Caco-2 (cell line): ENCODE measurements at regions of chr7 and their contacts with region 1.

Region 1: GRCh38 chr7:116809636-116810266 is 52.6 kb upstream of the CAPZA2 start:
- DNase-seq: peak; percentile 62 to 83
- H3K4me3 ChIP-seq: peak overlapping the region; percentile 13
- H3K4me3 Mint-ChIP-seq: peak overlapping the region; percentile 75
- H3K27ac Mint-ChIP-seq: peak overlapping the region; percentile 89
- H3K4me1 ChIP-seq: peaks cover 66% of the 10 kb centered on the region
- H3K4me1 Mint-ChIP-seq: peaks cover 45% of the 10 kb centered on the region
- H3K27me3 ChIP-seq: no peaks in the 10 kb centered on the region
- H3K27me3 Mint-ChIP-seq: no peaks in the 10 kb centered on the region
- CTCF ChIP-seq: peak; percentile 42 to 66

Region 2: DNA sequence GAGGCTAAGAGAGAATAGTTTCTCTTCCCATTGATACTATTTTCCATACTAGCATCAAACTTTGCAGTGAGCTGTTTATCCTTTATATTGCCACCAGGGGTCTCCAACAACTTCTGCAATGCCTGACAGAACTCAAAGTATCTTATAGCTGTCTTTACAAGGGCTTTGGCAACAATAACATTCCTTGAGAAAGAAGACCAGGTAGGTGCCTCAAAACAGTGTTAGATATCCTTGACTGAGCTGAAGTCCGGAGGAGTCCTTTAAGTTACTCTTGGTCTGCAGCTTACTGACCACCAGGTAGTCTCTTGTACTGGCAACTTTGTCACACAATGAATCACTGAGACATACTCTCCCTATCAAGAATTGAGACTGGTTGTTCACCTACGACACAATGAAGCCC is 629.4 kb before region 1 on chr7:
- CTCF ChIA-PET with region 1: interaction called, 3 read pairs
- POLR2A ChIA-PET with region 1: no interaction called
- intact Hi-C with region 1: loop called (anchors 1 kb)
- DNase-seq: peak; percentile 47 to 58
- H3K4me3 ChIP-seq: no peak overlapping the region
- H3K4me3 Mint-ChIP-seq: no peak overlapping the region
- H3K27ac Mint-ChIP-seq: no peak overlapping the region
- H3K4me1 ChIP-seq: no peaks in the 10 kb centered on the region
- H3K4me1 Mint-ChIP-seq: no peaks in the 10 kb centered on the region
- H3K27me3 ChIP-seq: no peaks in the 10 kb centered on the region
- H3K27me3 Mint-ChIP-seq: no peaks in the 10 kb centered on the region
- CTCF ChIP-seq: peak; percentile 73 to 80

Region 3: DNA sequence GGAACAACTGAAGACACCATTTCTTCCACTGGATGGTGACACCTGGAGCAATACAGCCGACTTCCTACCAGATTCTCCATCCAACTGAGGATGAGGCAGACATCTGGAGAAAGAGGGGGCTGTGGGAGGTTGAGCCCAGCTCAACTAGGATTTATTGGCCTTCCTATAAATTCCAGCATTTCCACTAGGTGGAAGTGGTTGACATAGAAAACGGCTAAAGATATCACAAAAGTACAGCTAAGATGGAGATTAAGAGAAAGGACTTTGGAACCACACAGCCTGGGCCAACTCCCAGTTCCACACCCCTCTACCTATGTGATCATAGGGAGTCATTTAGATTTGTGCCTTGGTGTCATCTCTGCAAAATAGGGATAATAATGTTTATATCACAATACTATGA is 371.5 kb before region 1 on chr7:
- CTCF ChIA-PET with region 1: no interaction called
- POLR2A ChIA-PET with region 1: no interaction called
- intact Hi-C with region 1: loop called (anchors 5 kb)
- DNase-seq: peak; percentile 42 to 47
- H3K4me3 ChIP-seq: no peak overlapping the region
- H3K4me3 Mint-ChIP-seq: no peak overlapping the region
- H3K27ac Mint-ChIP-seq: no peak overlapping the region
- H3K4me1 ChIP-seq: peaks cover 24% of the 10 kb centered on the region
- H3K4me1 Mint-ChIP-seq: peaks cover 4% of the 10 kb centered on the region
- H3K27me3 ChIP-seq: no peaks in the 10 kb centered on the region
- H3K27me3 Mint-ChIP-seq: no peaks in the 10 kb centered on the region
- CTCF ChIP-seq: peak; percentile 19 to 41

Region 4: DNA sequence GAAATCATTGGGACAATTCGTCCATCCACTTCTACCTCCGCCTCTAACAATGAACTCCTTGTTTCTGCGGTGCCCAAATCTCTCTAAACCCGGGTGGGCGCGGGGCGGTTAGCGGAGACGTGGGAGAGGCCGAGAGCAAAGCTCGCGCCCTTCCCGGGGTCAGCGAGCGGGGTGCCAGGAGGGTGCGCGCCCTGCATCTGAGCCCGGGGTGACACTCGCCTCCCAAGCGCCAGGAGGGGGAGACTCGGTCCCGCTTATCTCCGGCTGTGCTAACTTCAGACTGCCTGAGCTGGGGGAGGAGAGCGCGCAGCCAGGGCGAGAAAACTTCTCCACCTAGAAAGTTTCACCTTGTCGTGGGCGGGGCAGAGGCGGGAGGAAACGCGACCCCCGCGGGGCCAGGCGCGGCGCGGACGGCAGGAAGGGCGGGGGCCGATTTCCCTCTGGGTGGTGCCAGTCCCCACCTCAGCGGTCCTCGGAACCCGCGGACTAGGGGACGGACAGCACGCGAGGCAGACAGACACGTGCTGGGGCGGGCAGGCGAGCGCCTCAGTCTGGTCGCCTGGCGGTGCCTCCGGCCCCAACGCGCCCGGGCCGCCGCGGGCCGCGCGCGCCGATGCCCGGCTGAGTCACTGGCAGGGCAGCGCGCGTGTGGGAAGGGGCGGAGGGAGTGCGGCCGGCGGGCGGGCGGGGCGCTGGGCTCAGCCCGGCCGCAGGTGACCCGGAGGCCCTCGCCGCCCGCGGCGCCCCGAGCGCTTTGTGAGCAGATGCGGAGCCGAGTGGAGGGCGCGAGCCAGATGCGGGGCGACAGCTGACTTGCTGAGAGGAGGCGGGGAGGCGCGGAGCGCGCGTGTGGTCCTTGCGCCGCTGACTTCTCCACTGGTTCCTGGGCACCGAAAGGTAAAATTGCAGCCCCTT is 137.8 kb before region 1 on chr7 and contains the start of gene MET:
- CTCF ChIA-PET with region 1: interaction called, 7 read pairs
- POLR2A ChIA-PET with region 1: no interaction called
- intact Hi-C with region 1: loop called (anchors 1 kb)
- DNase-seq: peak; percentile 91 to 92
- H3K4me3 ChIP-seq: peak within 1 kb of the TSS; percentile 84
- H3K4me3 Mint-ChIP-seq: peak within 1 kb of the TSS; percentile 94
- H3K27ac Mint-ChIP-seq: peak within 1 kb of the TSS; percentile 47
- H3K4me1 ChIP-seq: peaks cover 5% of the 10 kb centered on the region
- H3K4me1 Mint-ChIP-seq: peaks cover 13% of the 10 kb centered on the region
- H3K27me3 ChIP-seq: no peaks in the 10 kb centered on the region
- H3K27me3 Mint-ChIP-seq: no peaks in the 10 kb centered on the region
- CTCF ChIP-seq: peak; percentile 70 to 87
- total RNA-seq, gene MET: 72.6 and 82.9 TPM in 2 replicates

Region 5: GRCh38 chr7:116762971-116763370 is 46.8 kb before region 1 on chr7:
- CTCF ChIA-PET with region 1: no interaction called
- POLR2A ChIA-PET with region 1: no interaction called
- intact Hi-C with region 1: no loop called
- DNase-seq: no peak
- H3K4me3 ChIP-seq: no peak overlapping the region
- H3K4me3 Mint-ChIP-seq: no peak overlapping the region
- H3K27ac Mint-ChIP-seq: no peak overlapping the region
- H3K4me1 ChIP-seq: no peaks in the 10 kb centered on the region
- H3K4me1 Mint-ChIP-seq: no peaks in the 10 kb centered on the region
- H3K27me3 ChIP-seq: no peaks in the 10 kb centered on the region
- H3K27me3 Mint-ChIP-seq: no peaks in the 10 kb centered on the region
- CTCF ChIP-seq: no peak

Region 6: DNA sequence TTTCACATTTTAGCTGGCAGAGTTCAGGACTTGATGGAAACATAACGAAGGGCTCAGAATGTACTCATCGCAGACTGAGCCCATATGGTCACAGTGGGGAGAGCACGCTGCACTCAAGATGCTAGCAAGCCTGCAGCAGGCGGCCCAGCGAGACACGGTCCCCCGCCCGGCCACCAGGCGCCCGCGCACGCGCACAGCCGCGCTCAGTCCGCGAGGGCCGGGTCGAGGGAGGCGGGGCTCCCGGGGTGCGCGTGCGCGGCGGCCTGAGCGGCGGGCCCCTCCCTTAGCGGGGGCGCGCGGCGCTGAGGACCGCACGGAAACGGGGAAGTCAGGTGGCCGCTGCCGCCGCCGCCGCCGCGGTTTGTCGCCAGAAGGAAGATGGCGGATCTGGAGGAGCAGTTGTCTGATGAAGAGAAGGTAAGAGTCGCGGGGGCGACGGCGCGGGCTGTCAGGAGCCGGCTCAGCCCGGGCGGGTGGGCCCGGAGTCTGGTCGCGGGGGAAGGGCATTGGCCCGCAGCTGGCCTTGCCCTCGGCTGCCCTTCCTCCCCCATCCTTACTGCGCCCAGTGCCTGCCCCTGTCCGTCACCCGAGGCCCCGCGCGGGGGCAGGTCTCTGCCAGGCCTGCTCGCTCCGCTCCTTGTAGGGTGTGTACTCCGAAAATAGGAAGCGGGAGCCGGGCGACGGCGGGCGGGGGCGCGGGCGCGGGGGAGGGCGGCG is 52.6 kb after region 1 on chr7 and contains the start of gene CAPZA2:
- CTCF ChIA-PET with region 1: no interaction called
- POLR2A ChIA-PET with region 1: no interaction called
- intact Hi-C with region 1: loop called (anchors 1 kb)
- DNase-seq: peak; percentile 91 to 97
- H3K4me3 ChIP-seq: peak within 1 kb of the TSS; percentile 99
- H3K4me3 Mint-ChIP-seq: peak within 1 kb of the TSS; percentile 95
- H3K27ac Mint-ChIP-seq: peak within 1 kb of the TSS; percentile 93
- H3K4me1 ChIP-seq: peaks cover 16% of the 10 kb centered on the region
- H3K4me1 Mint-ChIP-seq: peaks cover 12% of the 10 kb centered on the region
- H3K27me3 ChIP-seq: no peaks in the 10 kb centered on the region
- H3K27me3 Mint-ChIP-seq: no peaks in the 10 kb centered on the region
- CTCF ChIP-seq: peak; percentile 8 to 29
- total RNA-seq, gene CAPZA2: 271 and 281 TPM in 2 replicates

Region 7: DNA sequence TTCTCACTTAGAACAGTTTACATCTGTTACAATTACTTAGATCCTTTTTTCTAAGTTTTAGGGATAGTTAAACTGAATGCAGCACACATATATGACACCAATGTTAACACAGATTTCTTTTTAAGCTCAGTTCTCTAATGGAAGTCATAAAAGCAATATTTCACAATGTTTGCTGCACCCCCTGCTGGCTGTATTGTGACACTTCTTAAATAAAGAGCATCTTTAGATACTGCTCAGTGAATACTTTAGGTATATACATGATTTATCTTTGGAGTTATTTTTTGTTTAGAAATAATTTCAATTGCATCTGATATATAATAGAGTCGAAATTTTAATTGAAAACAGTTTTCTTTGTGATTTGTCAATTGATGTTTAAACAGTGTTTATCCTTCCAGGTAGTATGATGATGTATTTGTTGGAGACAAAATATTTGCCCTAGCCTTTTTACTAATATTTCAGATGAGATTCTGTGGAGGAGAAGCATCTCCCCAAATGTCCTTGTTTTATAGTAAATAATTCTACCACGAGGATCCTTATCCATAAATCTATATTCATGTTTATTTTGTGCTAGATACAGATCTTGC is 317.9 kb after region 1 on chr7:
- CTCF ChIA-PET with region 1: no interaction called
- POLR2A ChIA-PET with region 1: no interaction called
- intact Hi-C with region 1: loop called (anchors 5 kb)
- DNase-seq: peak in 1 of 2 experiments; percentile 49
- H3K4me3 ChIP-seq: no peak overlapping the region
- H3K4me3 Mint-ChIP-seq: no peak overlapping the region
- H3K27ac Mint-ChIP-seq: no peak overlapping the region
- H3K4me1 ChIP-seq: no peaks in the 10 kb centered on the region
- H3K4me1 Mint-ChIP-seq: no peaks in the 10 kb centered on the region
- H3K27me3 ChIP-seq: no peaks in the 10 kb centered on the region
- H3K27me3 Mint-ChIP-seq: no peaks in the 10 kb centered on the region
- CTCF ChIP-seq: peak; percentile 82